Naive thymus-derived CD4-positive, alpha-beta T cell (primary cell): ENCODE measurements at regions of chr9 and their contacts with region 1.

Region 1: GRCh38 chr9:99076483-99077171 is 28.3 kb upstream of the TGFBR1 start:
- DNase-seq: peak in 7 of 9 donors; percentile 17 to 58 (median 42)
- ATAC-seq: peak; percentile 95
- H3K4me3 ChIP-seq: no peak overlapping the region
- H3K4me3 Mint-ChIP-seq: peak overlapping the region; percentile 1 to 79 (median 62)
- H3K27ac ChIP-seq: peak overlapping the region; percentile 18
- H3K27ac Mint-ChIP-seq: peak overlapping the region; percentile 53 to 93 (median 81)
- H3K4me1 ChIP-seq: peaks cover 17 to 26% of the 10 kb centered on the region in 2 donors
- H3K4me1 Mint-ChIP-seq: peaks cover 35 to 75% (median 60%) of the 10 kb centered on the region in 7 donors
- H3K27me3 ChIP-seq: no peaks in the 10 kb centered on the region
- H3K27me3 Mint-ChIP-seq: peaks cover 0 to 3% (median 0%) of the 10 kb centered on the region in 5 donors

Region 2: GRCh38 chr9:98766586-98766985 is 310.0 kb before region 1 on chr9:
- CTCF ChIA-PET with region 1: no interaction called
- POLR2A ChIA-PET with region 1: no interaction called
- intact Hi-C with region 1: no loop called
- DNase-seq: peak in 1 of 9 donors; percentile 2
- ATAC-seq: peak; percentile 26
- H3K4me3 ChIP-seq: no peak overlapping the region
- H3K4me3 Mint-ChIP-seq: no peak overlapping the region
- H3K27ac ChIP-seq: no peak overlapping the region
- H3K27ac Mint-ChIP-seq: no peak overlapping the region
- H3K4me1 ChIP-seq: no peaks in the 10 kb centered on the region
- H3K4me1 Mint-ChIP-seq: no peaks in the 10 kb centered on the region
- H3K27me3 ChIP-seq: no peaks in the 10 kb centered on the region
- H3K27me3 Mint-ChIP-seq: no peaks in the 10 kb centered on the region

Region 3: GRCh38 chr9:98929071-98929470 is 147.6 kb before region 1 on chr9:
- CTCF ChIA-PET with region 1: no interaction called
- POLR2A ChIA-PET with region 1: no interaction called
- intact Hi-C with region 1: no loop called
- DNase-seq: no peak
- ATAC-seq: no peak
- H3K4me3 ChIP-seq: no peak overlapping the region
- H3K4me3 Mint-ChIP-seq: no peak overlapping the region
- H3K27ac ChIP-seq: no peak overlapping the region
- H3K27ac Mint-ChIP-seq: no peak overlapping the region
- H3K4me1 ChIP-seq: no peaks in the 10 kb centered on the region
- H3K4me1 Mint-ChIP-seq: no peaks in the 10 kb centered on the region
- H3K27me3 ChIP-seq: no peaks in the 10 kb centered on the region
- H3K27me3 Mint-ChIP-seq: peaks cover 0 to 24% (median 9%) of the 10 kb centered on the region in 5 donors

Region 4: GRCh38 chr9:99004717-99005460 is 71.7 kb before region 1 on chr9:
- CTCF ChIA-PET with region 1: no interaction called
- POLR2A ChIA-PET with region 1: no interaction called
- intact Hi-C with region 1: no loop called
- DNase-seq: peak in 1 of 9 donors; percentile 13
- ATAC-seq: no peak
- H3K4me3 ChIP-seq: no peak overlapping the region
- H3K4me3 Mint-ChIP-seq: no peak overlapping the region
- H3K27ac ChIP-seq: no peak overlapping the region
- H3K27ac Mint-ChIP-seq: peak overlapping the region in 2 of 9 donors; percentile 4 to 76
- H3K4me1 ChIP-seq: peaks cover 0 to 14% of the 10 kb centered on the region in 2 donors
- H3K4me1 Mint-ChIP-seq: peaks cover 16 to 37% (median 22%) of the 10 kb centered on the region in 7 donors
- H3K27me3 ChIP-seq: no peaks in the 10 kb centered on the region
- H3K27me3 Mint-ChIP-seq: peaks cover 0 to 13% (median 0%) of the 10 kb centered on the region in 5 donors

Region 5: DNA sequence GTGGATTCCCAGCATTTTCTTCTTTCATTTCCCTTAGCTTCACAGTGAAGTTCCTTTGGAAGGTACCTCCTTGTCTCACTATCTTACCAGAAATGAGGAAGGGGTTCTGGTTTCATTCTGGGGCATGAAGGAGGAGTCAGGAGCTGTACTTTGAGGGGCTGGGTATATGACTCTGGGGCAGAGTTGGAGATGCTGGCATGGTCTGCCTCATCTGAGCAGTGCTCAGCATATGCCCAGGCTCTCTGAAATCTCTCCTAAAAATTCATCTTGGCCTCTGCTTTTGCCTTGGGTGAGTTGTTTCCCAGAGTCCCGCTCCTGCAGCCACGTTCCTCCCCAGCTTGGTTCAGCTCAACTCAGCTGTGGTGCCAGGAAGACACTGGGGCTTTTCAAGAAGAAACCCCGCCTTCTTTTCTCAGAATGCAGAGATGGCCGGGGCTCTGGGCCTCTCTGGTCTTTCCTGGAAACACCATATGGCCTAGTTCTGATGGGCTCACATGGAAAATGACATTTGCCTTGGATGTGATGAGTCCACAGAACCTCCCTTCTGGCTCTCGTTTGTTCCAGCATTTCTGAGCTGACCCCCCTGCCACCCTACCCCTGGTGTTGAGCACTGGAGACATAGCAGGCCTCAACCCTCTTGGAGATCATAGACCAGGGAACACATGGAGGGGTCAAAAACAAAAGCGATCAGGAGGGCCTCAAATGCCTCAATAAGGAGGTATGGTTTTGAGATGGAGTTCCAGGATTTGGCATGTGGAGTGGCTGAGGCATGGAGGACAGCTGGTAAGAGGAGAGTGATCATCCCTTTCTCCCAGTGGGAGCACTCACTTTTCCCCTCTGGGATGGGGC is 16.2 kb after region 1 on chr9:
- CTCF ChIA-PET with region 1: no interaction called
- POLR2A ChIA-PET with region 1: no interaction called
- intact Hi-C with region 1: loop called (anchors 1 kb)
- DNase-seq: peak in 1 of 9 donors; percentile 41
- ATAC-seq: peak; percentile 44
- H3K4me3 ChIP-seq: no peak overlapping the region
- H3K4me3 Mint-ChIP-seq: peak overlapping the region in 9 of 10 donors; percentile 11 to 72 (median 61)
- H3K27ac ChIP-seq: no peak overlapping the region
- H3K27ac Mint-ChIP-seq: peak overlapping the region in 6 of 9 donors; percentile 8 to 94 (median 62)
- H3K4me1 ChIP-seq: peaks cover 15 to 22% of the 10 kb centered on the region in 2 donors
- H3K4me1 Mint-ChIP-seq: peaks cover 28 to 74% (median 42%) of the 10 kb centered on the region in 7 donors
- H3K27me3 ChIP-seq: no peaks in the 10 kb centered on the region
- H3K27me3 Mint-ChIP-seq: no peaks in the 10 kb centered on the region

Region 6: DNA sequence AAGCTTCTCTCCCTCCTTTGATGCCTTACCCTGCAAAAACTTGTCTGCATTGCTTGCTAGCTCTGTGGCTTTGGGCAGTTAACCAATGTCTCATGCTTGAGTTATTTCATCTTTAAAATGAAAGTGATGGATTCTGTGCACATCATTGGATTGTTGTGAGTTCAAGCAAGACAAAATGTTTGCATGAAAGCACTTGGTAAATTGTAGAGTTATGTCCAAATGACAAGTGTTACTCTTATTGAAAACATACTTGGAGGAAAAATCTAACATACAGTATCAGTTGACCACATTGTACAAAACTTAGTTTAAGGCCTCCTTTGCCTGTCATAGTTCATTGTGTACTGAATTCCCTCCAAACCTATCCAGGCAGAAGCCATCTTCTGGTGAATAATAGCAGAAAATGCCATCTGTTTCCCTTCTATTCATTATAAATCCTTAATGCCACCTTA is 58.3 kb after region 1 on chr9:
- CTCF ChIA-PET with region 1: interaction called, 3 read pairs
- POLR2A ChIA-PET with region 1: no interaction called
- intact Hi-C with region 1: loop called in 1 of 2 experiments (anchors 2 kb)
- DNase-seq: peak in 7 of 9 donors; percentile 32 to 54 (median 42)
- ATAC-seq: peak; percentile 67
- H3K4me3 ChIP-seq: peak overlapping the region; percentile 32
- H3K4me3 Mint-ChIP-seq: peak overlapping the region; percentile 61 to 82 (median 74)
- H3K27ac ChIP-seq: peak overlapping the region; percentile 50
- H3K27ac Mint-ChIP-seq: peak overlapping the region; percentile 72 to 96 (median 89)
- H3K4me1 ChIP-seq: peaks cover 21 to 53% of the 10 kb centered on the region in 2 donors
- H3K4me1 Mint-ChIP-seq: peaks cover 48 to 95% (median 90%) of the 10 kb centered on the region in 7 donors
- H3K27me3 ChIP-seq: no peaks in the 10 kb centered on the region
- H3K27me3 Mint-ChIP-seq: no peaks in the 10 kb centered on the region